Heart left ventricle (tissue), 16 donors: ENCODE measurements at regions of chr15 and their contacts with region 1.

Region 1: GRCh38 chr15:97234851-97235610 is 725.5 kb upstream of the ARRDC4 start:
- DNase-seq: peak in 3 of 5 donors; percentile 19 to 24 (median 24)
- ATAC-seq: peak in 3 of 4 donors; percentile 49 to 62 (median 60)
- H3K4me3 ChIP-seq: peak overlapping the region in 2 of 12 donors; percentile 17
- H3K27ac ChIP-seq: no peak overlapping the region
- H3K4me1 ChIP-seq: peaks cover 0 to 4% (median 0%) of the 10 kb centered on the region in 12 donors
- H3K27me3 ChIP-seq: peaks cover 0 to 3% (median 0%) of the 10 kb centered on the region in 9 donors
- CTCF ChIP-seq: peak; percentile 68 to 91 (median 82)
- POLR2A ChIP-seq: no peak

Region 2: DNA sequence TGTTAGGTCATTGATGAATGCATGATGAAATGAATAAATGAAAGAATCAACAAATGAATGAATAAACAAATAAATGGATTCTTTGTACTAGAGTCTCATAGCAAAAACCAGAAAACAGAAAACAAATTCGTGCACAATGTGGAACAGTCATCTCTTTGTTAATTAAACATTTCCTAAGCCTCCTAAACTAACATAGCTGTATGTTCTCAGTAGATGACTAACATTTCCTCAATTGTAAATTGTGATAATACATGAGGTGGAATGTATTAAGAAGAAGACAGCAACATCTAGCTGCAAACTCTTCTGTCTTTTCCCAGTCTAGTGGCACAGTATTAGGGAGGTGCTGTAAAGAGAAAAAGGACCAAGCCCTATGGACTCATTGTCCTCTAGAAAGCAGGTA is 1982.6 kb before region 1 on chr15:
- intact Hi-C with region 1: loop called in 4 of 10 experiments (anchors 5 to 10 kb)
- DNase-seq: no peak
- ATAC-seq: no peak
- H3K4me3 ChIP-seq: no peak overlapping the region
- H3K27ac ChIP-seq: no peak overlapping the region
- H3K4me1 ChIP-seq: peaks cover 0 to 12% (median 0%) of the 10 kb centered on the region in 12 donors
- H3K27me3 ChIP-seq: no peaks in the 10 kb centered on the region
- CTCF ChIP-seq: no peak
- POLR2A ChIP-seq: no peak

Region 3: GRCh38 chr15:97059281-97059680 is 175.8 kb before region 1 on chr15:
- intact Hi-C with region 1: no loop called
- DNase-seq: no peak
- ATAC-seq: no peak
- H3K4me3 ChIP-seq: no peak overlapping the region
- H3K27ac ChIP-seq: no peak overlapping the region
- H3K4me1 ChIP-seq: no peaks in the 10 kb centered on the region
- H3K27me3 ChIP-seq: peaks cover 0 to 6% (median 0%) of the 10 kb centered on the region in 9 donors
- CTCF ChIP-seq: no peak
- POLR2A ChIP-seq: no peak